Right ventricle myocardium inferior (tissue), 1 donor: ENCODE measurements at regions of chr13 and their contacts with region 1.

Region 1: GRCh38 chr13:74287724-74288169 is 153.5 kb upstream of the KLF12 start:
- DNase-seq: peak; percentile 82
- ATAC-seq: peak; percentile 39

Region 2: GRCh38 chr13:73492811-73493210 is 794.9 kb before region 1 on chr13:
- intact Hi-C with region 1: no loop called
- DNase-seq: no peak
- ATAC-seq: no peak

Region 3: GRCh38 chr13:73754727-73755292 is 532.9 kb before region 1 on chr13:
- intact Hi-C with region 1: loop called (anchors 2 kb)
- DNase-seq: no peak
- ATAC-seq: peak; percentile 52